Calu3 (cell line): ENCODE measurements at regions of chr12 and their contacts with region 1.

Region 1: DNA sequence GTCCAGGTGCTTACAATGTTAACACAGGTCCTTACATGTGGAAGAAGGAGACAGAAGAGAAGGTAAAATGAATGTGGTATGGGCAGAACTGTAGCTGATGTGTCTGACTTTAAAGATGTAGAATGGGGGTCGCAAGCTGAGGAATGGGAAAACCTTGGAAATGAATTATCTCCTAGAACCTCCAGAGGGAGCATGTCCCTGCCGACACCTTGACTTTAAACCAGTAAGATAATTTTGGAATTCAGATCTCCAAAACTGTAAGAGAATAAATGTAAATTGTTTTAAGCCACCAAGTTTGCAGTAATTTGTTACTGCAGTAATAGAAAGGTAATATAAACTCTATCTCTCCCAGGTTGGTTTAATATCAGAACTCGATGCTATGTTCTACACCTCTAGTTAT is 80.1 kb upstream of the ALG10 start:
- DNase-seq: no peak
- H3K4me3 Mint-ChIP-seq: no peak overlapping the region
- H3K27ac Mint-ChIP-seq: no peak overlapping the region
- H3K4me1 Mint-ChIP-seq: peaks cover 13% of the 10 kb centered on the region
- H3K27me3 Mint-ChIP-seq: no peaks in the 10 kb centered on the region
- CTCF ChIP-seq: peak; percentile 33

Region 2: GRCh38 chr12:33752854-33753253 is 189.3 kb before region 1 on chr12:
- CTCF ChIA-PET with region 1: no interaction called
- intact Hi-C with region 1: no loop called
- DNase-seq: no peak
- H3K4me3 Mint-ChIP-seq: no peak overlapping the region
- H3K27ac Mint-ChIP-seq: no peak overlapping the region
- H3K4me1 Mint-ChIP-seq: no peaks in the 10 kb centered on the region
- H3K27me3 Mint-ChIP-seq: no peaks in the 10 kb centered on the region
- CTCF ChIP-seq: no peak

Region 3: GRCh38 chr12:34016361-34016760 is 74.2 kb after region 1 on chr12:
- CTCF ChIA-PET with region 1: no interaction called
- intact Hi-C with region 1: loop called (anchors 10 kb)
- DNase-seq: no peak
- H3K4me3 Mint-ChIP-seq: no peak overlapping the region
- H3K27ac Mint-ChIP-seq: no peak overlapping the region
- H3K4me1 Mint-ChIP-seq: no peaks in the 10 kb centered on the region
- H3K27me3 Mint-ChIP-seq: no peaks in the 10 kb centered on the region
- CTCF ChIP-seq: no peak